Dendritic cell treated with granulocyte-macrophage colony-stimulating factor and Interleukin-4, amounts not matched to agents 40 ng/mL and 50 ng/mL, for 4 days (primary cell): ENCODE measurements at regions of chr1 and their contacts with region 1.

Region 1: GRCh38 chr1:229507951-229508822 is at the start of gene NUP133:
- H3K4me3 Mint-ChIP-seq: peak within 1 kb of the TSS; percentile 79
- H3K27ac Mint-ChIP-seq: peak within 1 kb of the TSS; percentile 94
- H3K4me1 Mint-ChIP-seq: peaks cover 12% of the 10 kb centered on the region
- H3K27me3 Mint-ChIP-seq: peaks cover 2% of the 10 kb centered on the region

Region 2: GRCh38 chr1:229270547-229271447 is 237.4 kb before region 1 on chr1 and contains the start of gene RAB4A:
- intact Hi-C with region 1: loop called (anchors 5 kb)
- H3K4me3 Mint-ChIP-seq: peak within 1 kb of the TSS; percentile 82
- H3K27ac Mint-ChIP-seq: peak within 1 kb of the TSS; percentile 88
- H3K4me1 Mint-ChIP-seq: peaks cover 55% of the 10 kb centered on the region
- H3K27me3 Mint-ChIP-seq: no peaks in the 10 kb centered on the region

Region 3: DNA sequence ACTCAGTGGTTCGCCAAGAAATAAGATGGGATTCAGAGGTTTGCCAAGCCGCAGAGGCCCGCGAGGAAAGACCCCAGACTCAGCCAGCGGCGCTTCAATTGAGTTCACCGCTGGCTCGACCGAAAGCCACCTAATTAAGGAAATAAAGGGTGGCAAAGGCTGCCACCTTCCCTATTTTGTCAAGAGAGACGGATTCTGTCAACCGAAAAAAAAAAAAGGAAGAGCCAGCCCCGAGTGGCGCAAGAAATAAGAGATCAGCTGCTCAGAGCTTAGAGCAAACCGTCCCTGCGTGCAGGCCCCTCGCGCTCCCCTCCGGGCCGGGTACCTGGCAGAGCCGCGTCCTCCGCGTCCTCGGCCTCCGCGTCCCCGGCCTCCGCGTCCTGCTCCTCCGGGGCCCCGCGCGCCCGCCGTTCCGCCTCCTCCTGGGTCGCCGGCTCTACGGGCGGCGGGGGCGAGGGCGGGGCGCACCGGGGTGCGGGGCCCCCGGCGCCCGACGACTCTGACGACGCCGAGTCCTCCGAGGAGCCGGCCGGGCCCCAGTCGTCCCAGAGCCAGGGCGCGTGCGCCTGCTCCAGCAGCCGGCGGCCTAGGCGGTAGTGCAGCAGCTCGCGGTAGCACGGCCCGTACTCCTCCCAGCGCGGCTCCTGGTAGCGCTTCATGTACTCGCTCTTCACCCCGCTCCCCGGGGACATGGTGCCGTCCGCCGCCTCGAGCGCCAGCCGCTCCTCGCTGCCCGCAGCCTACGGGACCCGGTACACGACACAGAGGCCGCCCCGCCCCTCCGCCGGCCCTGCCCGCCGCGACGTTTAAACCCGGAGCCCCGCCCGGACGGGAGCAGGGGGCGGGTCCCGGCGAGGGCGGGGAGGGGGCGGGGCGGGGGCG is 166.2 kb before region 1 on chr1:
- intact Hi-C with region 1: loop called (anchors 5 kb)
- H3K4me3 Mint-ChIP-seq: peak overlapping the region; percentile 91
- H3K27ac Mint-ChIP-seq: peak overlapping the region; percentile 93
- H3K4me1 Mint-ChIP-seq: peaks cover 79% of the 10 kb centered on the region
- H3K27me3 Mint-ChIP-seq: peaks cover 11% of the 10 kb centered on the region

Region 4: GRCh38 chr1:229625915-229626831 is 118.0 kb after region 1 on chr1 and contains the starts of genes TAF5L and URB2:
- intact Hi-C with region 1: loop called (anchors 1 kb)
- H3K4me3 Mint-ChIP-seq: peak within 1 kb of the TSS; percentile 99
- H3K27ac Mint-ChIP-seq: peak within 1 kb of the TSS; percentile 83
- H3K4me1 Mint-ChIP-seq: peaks cover 41% of the 10 kb centered on the region
- H3K27me3 Mint-ChIP-seq: no peaks in the 10 kb centered on the region

Region 5: GRCh38 chr1:229781453-229781852 is 273.3 kb after region 1 on chr1:
- intact Hi-C with region 1: no loop called
- H3K4me3 Mint-ChIP-seq: no peak overlapping the region
- H3K27ac Mint-ChIP-seq: no peak overlapping the region
- H3K4me1 Mint-ChIP-seq: no peaks in the 10 kb centered on the region
- H3K27me3 Mint-ChIP-seq: no peaks in the 10 kb centered on the region